HEK293T (cell line): ENCODE measurements at regions of chr22 and their contacts with region 1.

Region 1: DNA sequence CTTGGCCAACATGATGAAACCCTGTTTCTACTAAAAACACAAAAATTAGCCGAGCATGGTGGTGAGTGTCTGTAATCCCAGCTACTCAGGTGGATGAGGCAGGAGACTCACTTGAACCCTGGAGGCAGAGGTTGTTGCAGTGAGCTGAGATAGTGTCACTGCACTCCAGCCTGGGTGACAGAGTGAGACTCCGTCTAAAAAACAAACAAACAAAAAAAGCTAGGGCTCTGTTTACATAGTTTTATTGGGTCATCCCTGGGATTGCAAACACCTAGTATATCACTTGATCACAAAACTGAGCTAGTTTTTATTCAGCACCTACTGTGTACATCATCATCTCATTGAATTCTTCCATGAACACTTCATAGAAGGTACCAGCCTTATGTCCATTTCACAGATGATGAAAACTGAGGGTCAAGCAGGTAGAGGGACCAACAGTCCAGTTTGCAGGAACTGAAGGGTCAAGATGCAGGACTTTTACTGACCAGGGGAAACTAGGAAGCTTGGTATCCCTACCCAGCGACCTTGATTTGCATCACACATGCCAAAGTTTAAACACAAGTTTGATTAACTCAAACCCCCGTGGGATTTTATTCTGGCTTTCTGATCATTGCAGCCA is 9.2 kb upstream of the MRTFA start:
- DNase-seq: no peak

Region 2: DNA sequence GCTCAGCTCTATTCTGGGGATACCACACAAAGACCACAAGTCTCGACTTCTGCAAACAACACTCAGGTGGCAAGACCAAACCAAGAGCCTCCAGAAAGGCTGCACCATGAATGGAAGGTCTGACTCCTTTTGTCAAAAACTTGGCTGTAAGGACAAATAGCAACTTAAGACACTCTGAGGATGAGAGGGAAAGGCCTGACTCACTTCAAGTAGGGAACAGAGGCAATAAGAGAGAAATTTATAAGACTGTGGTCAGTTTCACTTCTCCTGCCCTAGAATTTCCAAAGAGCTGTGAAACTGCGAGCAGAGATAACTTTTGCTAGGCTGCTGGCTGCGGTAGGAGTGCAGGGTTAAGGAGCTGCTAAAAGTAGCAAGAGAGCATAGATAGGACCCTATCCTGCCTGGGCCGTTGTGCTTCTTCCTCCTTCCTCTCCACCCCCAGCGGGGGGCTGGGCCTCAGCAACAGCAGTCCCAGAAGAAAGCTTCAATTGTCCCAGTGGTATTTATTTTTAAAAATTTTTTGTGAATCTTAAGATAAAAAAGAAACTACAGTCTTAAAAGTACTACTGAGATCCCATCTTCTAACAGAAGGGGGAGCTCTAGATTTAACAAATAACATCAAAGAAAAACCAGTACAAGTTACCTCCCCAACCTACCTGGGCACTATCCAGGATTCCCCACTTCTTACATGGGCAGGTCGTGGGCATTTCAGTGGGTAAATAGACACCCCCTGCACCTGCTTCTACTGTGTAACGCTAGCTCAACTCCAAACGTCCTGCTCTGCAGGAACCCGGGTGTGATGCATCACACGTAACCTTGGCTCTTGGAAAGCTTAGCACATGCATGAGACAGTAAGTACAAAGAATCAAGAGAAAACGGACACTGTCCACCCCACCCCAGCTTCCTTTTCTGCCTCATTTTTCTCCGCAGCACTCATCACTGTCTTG is 208.9 kb before region 1 on chr22:
- CTCF ChIA-PET with region 1: interaction called, 24 read pairs
- POLR2A ChIA-PET with region 1: no interaction called
- DNase-seq: peak; percentile 58

Region 3: GRCh38 chr22:40525249-40525884 is 120.3 kb before region 1 on chr22:
- CTCF ChIA-PET with region 1: interaction called, 19 read pairs
- POLR2A ChIA-PET with region 1: interaction called, 5 read pairs
- DNase-seq: no peak

Region 4: GRCh38 chr22:40911772-40912171 is 266.1 kb after region 1 on chr22:
- CTCF ChIA-PET with region 1: no interaction called
- POLR2A ChIA-PET with region 1: no interaction called
- DNase-seq: no peak